ENCODE measurements at regions of chr12 and their contacts with region 1.

Region 1: GRCh38 chr12:116955382-116956021 is 44.8 kb downstream of the FBXW8 start:
- DNase-seq: peak; percentile 12
- H3K4me3 Mint-ChIP-seq: no peak overlapping the region
- H3K27ac Mint-ChIP-seq: no peak overlapping the region
- H3K4me1 Mint-ChIP-seq: peaks cover 20% of the 10 kb centered on the region
- H3K27me3 Mint-ChIP-seq: no peaks in the 10 kb centered on the region

Region 2: DNA sequence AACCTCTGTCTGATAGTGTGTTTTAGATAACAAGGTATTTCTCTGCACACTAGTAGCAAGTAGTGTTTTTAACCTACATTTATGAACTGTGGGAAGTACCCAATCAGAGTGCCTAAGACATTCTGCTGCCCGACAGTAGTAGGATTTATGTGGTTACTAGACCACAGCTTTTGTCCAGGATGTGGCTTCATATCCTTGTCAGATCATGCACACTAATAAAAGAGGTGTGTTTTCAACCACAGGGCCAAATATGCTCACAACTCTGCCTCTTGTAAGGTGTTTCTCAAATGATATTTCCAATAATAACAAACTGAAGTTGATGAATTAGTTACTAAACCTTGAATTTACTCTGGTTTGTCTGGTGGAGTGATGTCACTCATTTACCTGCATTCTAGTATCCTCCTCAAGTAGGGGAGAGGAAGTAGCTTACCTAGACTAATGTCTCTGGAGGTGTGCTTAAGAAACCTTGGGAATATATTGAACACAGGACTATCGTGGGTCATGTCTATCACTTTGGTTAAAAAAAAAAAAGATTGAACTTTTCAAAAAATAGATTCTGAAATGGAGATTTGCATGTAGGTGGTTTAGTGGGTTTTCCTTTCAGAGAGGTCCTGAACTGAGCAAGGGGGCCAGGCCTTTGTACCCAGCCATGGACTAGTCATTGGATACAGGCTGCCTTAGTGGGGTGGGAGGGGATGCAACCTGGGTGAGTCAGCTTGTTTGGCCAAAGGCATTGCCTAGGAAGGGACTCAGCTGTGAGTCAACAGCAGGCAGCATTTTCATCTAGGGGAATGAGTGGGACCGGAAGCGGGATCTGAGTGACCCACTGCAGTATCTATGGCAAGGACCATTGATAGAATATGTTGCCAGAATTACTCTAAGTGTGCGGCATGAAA is 30.7 kb before region 1 on chr12:
- CTCF ChIA-PET with region 1: no interaction called
- POLR2A ChIA-PET with region 1: no interaction called
- intact Hi-C with region 1: loop called (anchors 1 kb)
- DNase-seq: peak; percentile 58
- H3K4me3 Mint-ChIP-seq: peak overlapping the region; percentile 10
- H3K27ac Mint-ChIP-seq: peak overlapping the region; percentile 40
- H3K4me1 Mint-ChIP-seq: peaks cover 59% of the 10 kb centered on the region
- H3K27me3 Mint-ChIP-seq: peaks cover 6% of the 10 kb centered on the region

Region 3: GRCh38 chr12:117279606-117280005 is 324.1 kb after region 1 on chr12:
- CTCF ChIA-PET with region 1: no interaction called
- POLR2A ChIA-PET with region 1: no interaction called
- intact Hi-C with region 1: no loop called
- DNase-seq: no peak
- H3K4me3 Mint-ChIP-seq: no peak overlapping the region
- H3K27ac Mint-ChIP-seq: no peak overlapping the region
- H3K4me1 Mint-ChIP-seq: no peaks in the 10 kb centered on the region
- H3K27me3 Mint-ChIP-seq: peaks cover 3% of the 10 kb centered on the region

Measured in activated CD4-positive, alpha-beta memory T cell treated with anti-CD3 and anti-CD28 coated beads for 36 hours (primary cell).